GM18951 (cell line): ENCODE measurements at regions of chr20 and their contacts with region 1.

Region 1: GRCh38 chr20:38165089-38165989 is at the start of gene TGM2:
- POLR2A ChIP-seq: no peak

Region 2: DNA sequence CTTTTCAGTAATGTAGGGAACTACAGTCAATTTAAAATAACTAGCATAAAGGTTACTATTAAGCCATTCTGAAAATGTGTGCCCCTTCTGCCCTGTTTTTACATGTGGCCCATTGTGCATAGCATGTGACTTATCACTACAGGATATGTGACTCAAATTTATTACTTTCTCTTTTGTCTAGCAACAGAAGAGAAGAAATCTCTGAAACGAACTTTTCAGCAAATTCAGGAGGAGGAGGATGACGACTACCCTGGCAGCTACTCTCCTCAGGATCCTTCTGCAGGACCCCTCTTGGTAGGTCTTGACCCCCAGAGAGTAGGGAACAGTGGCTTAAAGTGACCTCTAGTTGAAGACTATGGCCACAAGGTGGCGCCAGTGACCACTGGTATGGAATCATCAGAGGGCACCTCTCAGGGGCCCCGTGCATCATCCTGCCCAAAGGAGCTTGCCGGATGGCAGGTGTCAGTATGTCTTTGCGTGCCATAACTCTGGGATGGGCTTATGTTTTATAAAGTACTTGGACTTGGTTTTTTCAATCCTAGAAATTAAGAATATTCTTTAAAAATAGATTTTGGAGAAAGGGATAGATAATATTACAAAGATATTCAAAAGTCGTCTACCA is 107.9 kb before region 1 on chr20:
- in situ Hi-C with region 1: loop called (anchors 10 kb)
- POLR2A ChIP-seq: no peak